A673 (cell line): ENCODE measurements at regions of chr20 and their contacts with region 1.

Region 1: DNA sequence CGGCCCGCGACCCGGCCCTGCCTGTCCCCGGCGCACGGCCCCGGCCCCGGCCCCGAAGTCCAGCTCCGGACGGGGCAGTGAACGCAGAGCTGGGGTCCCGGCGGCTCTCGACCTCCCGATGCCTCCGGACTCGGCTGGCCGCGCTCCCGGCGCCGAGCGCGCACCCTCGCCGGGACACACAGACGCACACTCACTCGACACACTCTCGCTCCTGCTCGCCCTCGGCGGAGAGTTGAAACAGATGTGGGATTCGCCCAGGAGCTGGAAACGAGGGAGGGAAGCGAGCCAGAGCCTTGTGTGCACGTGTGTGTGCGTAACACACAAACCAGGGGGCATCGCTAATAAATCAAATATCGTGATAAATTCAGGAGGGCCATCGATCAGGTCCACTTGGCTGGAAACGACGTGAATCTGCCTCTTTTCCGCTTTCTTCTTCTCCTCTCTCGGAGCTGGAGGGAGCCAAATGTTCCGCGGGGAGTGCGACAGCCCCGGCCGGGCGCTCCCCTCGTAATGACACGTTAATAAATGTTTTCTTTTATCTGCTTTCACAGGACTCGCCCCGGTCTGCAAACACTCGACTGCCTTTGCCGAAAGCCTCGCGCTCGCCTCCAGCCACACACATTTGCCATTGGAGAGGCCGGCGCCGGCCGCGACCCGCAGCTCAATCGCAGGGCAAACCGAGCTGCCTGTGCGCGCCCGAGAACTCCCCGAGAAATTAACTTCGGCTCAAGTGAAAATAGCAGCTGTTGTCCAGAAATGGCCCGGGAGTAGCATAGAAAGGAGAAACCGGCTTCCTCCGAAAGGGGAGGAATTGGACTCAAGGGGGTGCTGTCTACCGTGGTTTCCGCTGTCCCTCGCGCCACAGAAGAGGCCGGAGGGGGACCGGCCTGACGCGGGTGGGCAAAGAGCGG is 828 bp upstream of the SULF2 start:
- DNase-seq: peak; percentile 66
- H3K4me3 ChIP-seq: peak overlapping the region; percentile 35
- H3K27ac ChIP-seq: no peak overlapping the region
- H3K4me1 ChIP-seq: peaks cover 15% of the 10 kb centered on the region
- H3K27me3 ChIP-seq: peaks cover 57% of the 10 kb centered on the region
- CTCF ChIP-seq: peak; percentile 67

Region 2: DNA sequence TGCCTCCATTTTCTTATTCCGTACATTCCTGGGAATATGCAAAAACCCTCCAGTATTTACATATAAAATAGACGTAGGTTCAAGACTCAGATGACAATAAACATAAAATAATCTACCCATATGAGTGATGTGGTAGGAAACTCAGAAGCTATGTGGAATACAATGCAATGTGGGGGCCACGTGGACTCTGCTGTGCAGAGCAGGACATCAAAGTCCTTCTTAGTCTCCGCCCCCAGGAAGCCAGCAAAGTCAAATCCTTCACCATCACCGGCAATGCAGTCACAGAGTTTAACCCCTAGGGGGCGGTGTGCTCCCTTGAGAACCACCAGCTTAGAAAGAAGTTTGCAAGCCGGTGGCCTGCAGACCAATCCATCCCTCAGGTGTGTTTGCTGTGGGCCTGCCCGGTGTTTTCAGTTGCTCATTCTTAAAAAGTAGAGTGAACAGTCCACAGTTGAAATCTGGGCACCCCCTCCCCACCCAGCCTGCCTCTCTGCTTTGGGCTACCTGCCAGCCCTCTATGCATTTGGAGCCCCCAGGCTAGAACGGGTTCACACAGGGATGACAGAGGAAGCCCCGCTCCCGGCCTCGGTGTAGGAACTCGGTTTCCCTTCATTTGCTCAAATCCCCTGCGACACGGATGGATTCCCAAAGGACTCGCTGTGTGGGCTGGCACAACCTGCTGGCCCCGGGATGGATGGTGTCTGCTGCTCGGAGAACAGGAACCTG is 60.7 kb before region 1 on chr20:
- CTCF ChIA-PET with region 1: no interaction called
- POLR2A ChIA-PET with region 1: no interaction called
- intact Hi-C with region 1: loop called (anchors 5 kb)
- DNase-seq: peak; percentile 91
- H3K4me3 ChIP-seq: no peak overlapping the region
- H3K27ac ChIP-seq: no peak overlapping the region
- H3K4me1 ChIP-seq: peaks cover 26% of the 10 kb centered on the region
- H3K27me3 ChIP-seq: no peaks in the 10 kb centered on the region
- CTCF ChIP-seq: peak; percentile 93

Region 3: DNA sequence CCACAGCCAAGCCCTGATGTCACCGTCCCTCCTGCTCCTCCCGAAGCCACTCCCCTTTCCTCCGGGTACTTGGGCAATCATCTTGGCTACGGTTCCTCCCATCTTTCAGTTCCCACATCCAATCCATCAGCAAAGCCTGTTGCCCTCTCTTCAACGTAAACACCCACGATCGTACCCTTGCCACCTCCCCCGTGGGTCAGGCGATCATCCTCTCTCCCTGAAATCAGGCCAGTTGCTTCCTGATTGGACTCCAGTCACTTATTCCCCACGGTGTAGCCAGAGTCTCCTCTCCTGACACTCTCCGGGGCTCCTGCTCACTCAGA is 45.3 kb before region 1 on chr20:
- CTCF ChIA-PET with region 1: no interaction called
- POLR2A ChIA-PET with region 1: no interaction called
- intact Hi-C with region 1: no loop called
- DNase-seq: peak; percentile 45
- H3K4me3 ChIP-seq: no peak overlapping the region
- H3K27ac ChIP-seq: no peak overlapping the region
- H3K4me1 ChIP-seq: no peaks in the 10 kb centered on the region
- H3K27me3 ChIP-seq: no peaks in the 10 kb centered on the region
- CTCF ChIP-seq: no peak

Region 4: GRCh38 chr20:48295445-48295963 is 509.4 kb after region 1 on chr20:
- CTCF ChIA-PET with region 1: no interaction called
- POLR2A ChIA-PET with region 1: no interaction called
- intact Hi-C with region 1: loop called (anchors 5 kb)
- DNase-seq: peak; percentile 56
- H3K4me3 ChIP-seq: no peak overlapping the region
- H3K27ac ChIP-seq: no peak overlapping the region
- H3K4me1 ChIP-seq: peaks cover 13% of the 10 kb centered on the region
- H3K27me3 ChIP-seq: peaks cover 8% of the 10 kb centered on the region
- CTCF ChIP-seq: 0 out of 2 replicates have a peak, but pooled peaks have one; percentile 23